ENCODE measurements at regions of chr16 and their contacts with region 1.

Region 1: GRCh38 chr16:57156351-57156703 is 29.5 kb downstream of the PSME3IP1 start:
- DNase-seq: no peak
- ATAC-seq: no peak
- H3K4me3 ChIP-seq: no peak overlapping the region
- H3K4me3 Mint-ChIP-seq: peak overlapping the region in 8 of 10 donors; percentile 1 to 67 (median 24)
- H3K27ac ChIP-seq: no peak overlapping the region
- H3K27ac Mint-ChIP-seq: peak overlapping the region; percentile 0 to 86 (median 60)
- H3K4me1 ChIP-seq: peaks cover 0 to 9% of the 10 kb centered on the region in 2 donors
- H3K4me1 Mint-ChIP-seq: peaks cover 17 to 60% (median 44%) of the 10 kb centered on the region in 7 donors
- H3K27me3 ChIP-seq: no peaks in the 10 kb centered on the region
- H3K27me3 Mint-ChIP-seq: no peaks in the 10 kb centered on the region

Region 2: GRCh38 chr16:57141822-57142631 is 14.3 kb before region 1 on chr16:
- CTCF ChIA-PET with region 1: no interaction called
- POLR2A ChIA-PET with region 1: interaction called, 9 read pairs
- intact Hi-C with region 1: loop called in 1 of 2 experiments (anchors 2 kb)
- DNase-seq: peak in 6 of 9 donors; percentile 41 to 58 (median 54)
- ATAC-seq: peak; percentile 84
- H3K4me3 ChIP-seq: no peak overlapping the region
- H3K4me3 Mint-ChIP-seq: peak overlapping the region; percentile 50 to 87 (median 77)
- H3K27ac ChIP-seq: peak overlapping the region; percentile 63
- H3K27ac Mint-ChIP-seq: peak overlapping the region; percentile 83 to 99 (median 94)
- H3K4me1 ChIP-seq: peaks cover 27 to 50% of the 10 kb centered on the region in 2 donors
- H3K4me1 Mint-ChIP-seq: peaks cover 31 to 85% (median 62%) of the 10 kb centered on the region in 7 donors
- H3K27me3 ChIP-seq: no peaks in the 10 kb centered on the region
- H3K27me3 Mint-ChIP-seq: no peaks in the 10 kb centered on the region

Region 3: GRCh38 chr16:57178793-57179212 is 22.5 kb after region 1 on chr16:
- CTCF ChIA-PET with region 1: no interaction called
- POLR2A ChIA-PET with region 1: no interaction called
- intact Hi-C with region 1: loop called in 1 of 2 experiments (anchors 2 kb)
- DNase-seq: no peak
- ATAC-seq: no peak
- H3K4me3 ChIP-seq: no peak overlapping the region
- H3K4me3 Mint-ChIP-seq: no peak overlapping the region
- H3K27ac ChIP-seq: no peak overlapping the region
- H3K27ac Mint-ChIP-seq: peak overlapping the region in 1 of 9 donors; percentile 4
- H3K4me1 ChIP-seq: peaks cover 0 to 2% of the 10 kb centered on the region in 2 donors
- H3K4me1 Mint-ChIP-seq: peaks cover 8 to 28% (median 16%) of the 10 kb centered on the region in 7 donors
- H3K27me3 ChIP-seq: no peaks in the 10 kb centered on the region
- H3K27me3 Mint-ChIP-seq: no peaks in the 10 kb centered on the region